ENCODE measurements at regions of chr11 and their contacts with region 1.

Region 1: DNA sequence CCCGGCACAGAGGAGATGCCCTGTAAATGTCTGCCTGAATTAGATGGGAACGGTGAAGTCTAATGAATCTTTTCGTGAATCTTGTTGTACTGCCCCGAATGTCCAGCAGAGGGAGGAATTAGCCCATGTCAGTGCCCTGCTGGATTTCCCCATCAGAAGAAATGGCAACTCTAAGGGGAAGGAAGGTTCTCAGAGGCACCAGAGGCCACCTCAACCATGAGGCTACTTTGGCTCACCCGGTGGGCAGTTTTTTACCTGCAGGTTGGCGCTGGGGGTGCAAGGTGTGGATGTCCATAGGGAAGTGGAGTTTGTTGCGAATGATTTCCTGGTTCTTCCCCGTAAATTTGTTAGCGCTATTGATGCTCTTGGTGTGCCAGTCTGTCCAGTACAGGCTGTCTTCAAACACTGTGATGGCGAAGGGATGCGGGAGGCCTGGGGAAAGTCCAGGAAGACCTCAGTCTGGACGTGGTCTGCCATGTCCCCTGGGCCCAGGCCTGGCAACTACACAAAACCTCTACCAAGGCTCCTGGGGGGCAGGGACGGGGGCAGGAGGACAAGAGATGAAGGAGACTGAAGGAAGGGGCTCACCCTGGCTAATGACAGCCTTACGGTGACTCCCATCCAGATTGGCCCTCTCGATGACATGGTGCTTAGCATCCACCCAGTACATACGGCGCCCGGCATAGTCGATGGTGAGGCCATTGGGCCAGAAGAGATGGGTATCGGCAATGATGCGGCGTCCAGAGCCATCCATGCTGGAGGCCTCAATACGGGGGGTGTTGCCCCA is 28.5 kb downstream of the LRP4 start:
- DNase-seq: peak in 3 of 4 donors; percentile 58 to 78 (median 67)
- ATAC-seq: peak; percentile 97
- H3K4me3 ChIP-seq: no peak overlapping the region
- H3K27ac ChIP-seq: no peak overlapping the region
- H3K4me1 ChIP-seq: no peaks in the 10 kb centered on the region
- H3K27me3 ChIP-seq: no peaks in the 10 kb centered on the region
- CTCF ChIP-seq: peak; percentile 73 to 81

Region 2: GRCh38 chr11:46234311-46234710 is 655.6 kb before region 1 on chr11:
- intact Hi-C with region 1: no loop called
- DNase-seq: no peak
- ATAC-seq: no peak
- H3K4me3 ChIP-seq: no peak overlapping the region
- H3K27ac ChIP-seq: no peak overlapping the region
- H3K4me1 ChIP-seq: peaks cover 17 to 36% of the 10 kb centered on the region in 2 donors
- H3K27me3 ChIP-seq: peaks cover 0 to 16% of the 10 kb centered on the region in 2 donors
- CTCF ChIP-seq: no peak

Region 3: DNA sequence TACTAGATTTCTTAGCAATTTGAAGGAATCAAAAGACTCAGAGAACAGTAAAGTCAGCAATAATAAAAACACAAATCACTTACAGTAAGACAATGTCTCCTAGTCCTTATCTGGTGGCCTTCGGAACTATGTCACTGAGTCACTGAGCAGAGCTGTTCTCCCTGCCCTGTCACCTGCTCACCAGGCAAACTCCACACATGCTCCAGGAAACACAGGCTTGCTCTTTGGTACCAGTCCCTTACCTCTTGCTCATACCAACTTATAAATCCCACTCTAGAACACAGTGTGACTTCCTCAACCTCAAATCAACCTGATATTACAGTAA is 417.2 kb before region 1 on chr11:
- intact Hi-C with region 1: no loop called
- DNase-seq: no peak
- ATAC-seq: peak; percentile 88
- H3K4me3 ChIP-seq: no peak overlapping the region
- H3K27ac ChIP-seq: no peak overlapping the region
- H3K4me1 ChIP-seq: peaks cover 6 to 8% of the 10 kb centered on the region in 2 donors
- H3K27me3 ChIP-seq: no peaks in the 10 kb centered on the region
- CTCF ChIP-seq: no peak

Region 4: DNA sequence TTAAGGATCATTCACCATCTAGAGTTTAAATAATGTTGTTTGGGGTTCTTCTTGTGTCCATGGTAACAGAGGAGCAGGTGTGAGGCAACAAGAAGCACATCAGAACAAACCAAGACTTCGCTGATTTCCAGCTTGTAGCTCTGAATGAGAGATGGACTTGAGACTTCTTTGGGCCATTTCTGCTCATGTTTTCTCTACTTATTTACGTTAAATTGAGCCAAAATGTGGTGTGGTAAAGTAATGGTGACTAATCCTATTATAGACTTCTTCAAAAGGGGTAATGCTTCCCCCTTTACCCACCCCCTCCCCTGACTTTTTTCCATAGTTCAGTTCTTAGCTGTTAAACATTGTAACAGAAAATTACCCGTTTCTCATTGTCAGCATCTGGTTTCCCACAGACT is 111.9 kb after region 1 on chr11:
- intact Hi-C with region 1: no loop called
- DNase-seq: no peak
- ATAC-seq: no peak
- H3K4me3 ChIP-seq: no peak overlapping the region
- H3K27ac ChIP-seq: no peak overlapping the region
- H3K4me1 ChIP-seq: peaks cover 26 to 29% of the 10 kb centered on the region in 2 donors
- H3K27me3 ChIP-seq: no peaks in the 10 kb centered on the region
- CTCF ChIP-seq: no peak

Region 5: GRCh38 chr11:47152953-47153950 is 263.4 kb after region 1 on chr11:
- intact Hi-C with region 1: loop called in 1 of 2 experiments (anchors 5 kb)
- DNase-seq: peak in 3 of 4 donors; percentile 63 to 88 (median 83)
- ATAC-seq: peak; percentile 94
- H3K4me3 ChIP-seq: no peak overlapping the region
- H3K27ac ChIP-seq: no peak overlapping the region
- H3K4me1 ChIP-seq: no peaks in the 10 kb centered on the region
- H3K27me3 ChIP-seq: no peaks in the 10 kb centered on the region
- CTCF ChIP-seq: peak; percentile 82 to 92

Region 6: GRCh38 chr11:47161134-47161854 is 271.4 kb after region 1 on chr11:
- intact Hi-C with region 1: loop called in 1 of 2 experiments (anchors 5 kb)
- DNase-seq: peak in 2 of 4 donors; percentile 64 to 79
- ATAC-seq: peak; percentile 78
- H3K4me3 ChIP-seq: no peak overlapping the region
- H3K27ac ChIP-seq: no peak overlapping the region
- H3K4me1 ChIP-seq: no peaks in the 10 kb centered on the region
- H3K27me3 ChIP-seq: no peaks in the 10 kb centered on the region
- CTCF ChIP-seq: peak; percentile 40 to 58